ENCODE measurements at regions of chr5 and their contacts with region 1.

Region 1: GRCh38 chr5:160787240-160787639 is 64.8 kb downstream of the ATP10B start:
- DNase-seq: peak; percentile 81
- H3K4me3 ChIP-seq: no peak overlapping the region
- H3K27ac ChIP-seq: peak overlapping the region in 3 of 4 donors; percentile 29 to 46 (median 45)
- H3K4me1 ChIP-seq: peaks cover 4 to 16% (median 5%) of the 10 kb centered on the region in 4 donors
- H3K27me3 ChIP-seq: no peaks in the 10 kb centered on the region
- CTCF ChIP-seq: peak; percentile 46 to 89 (median 68)
- EP300 ChIP-seq: no peak
- POLR2A ChIP-seq: no peak

Region 2: DNA sequence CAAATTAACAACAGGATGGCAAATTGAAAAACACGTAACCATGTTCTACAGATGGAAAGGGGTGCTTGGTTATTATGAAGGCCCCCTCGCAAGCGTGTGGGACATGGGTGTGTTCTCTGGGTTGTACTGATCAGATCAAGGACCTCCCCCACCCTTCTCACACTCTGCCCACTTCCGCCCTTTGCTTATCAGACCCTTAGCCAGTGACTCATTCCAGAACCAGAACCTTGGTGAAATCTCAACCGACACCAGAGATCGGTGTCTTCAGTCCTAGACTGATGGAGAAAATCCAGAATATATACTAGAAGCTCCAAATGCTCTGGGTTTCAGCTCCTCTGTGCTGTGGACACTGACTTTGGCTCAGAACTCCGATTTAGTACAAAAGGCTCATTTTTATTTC is 300.7 kb before region 1 on chr5:
- in situ Hi-C with region 1: loop called in 1 of 4 experiments (anchors 25 kb)
- intact Hi-C with region 1: no loop called
- DNase-seq: no peak
- H3K4me3 ChIP-seq: no peak overlapping the region
- H3K27ac ChIP-seq: no peak overlapping the region
- H3K4me1 ChIP-seq: no peaks in the 10 kb centered on the region
- H3K27me3 ChIP-seq: no peaks in the 10 kb centered on the region
- CTCF ChIP-seq: no peak
- EP300 ChIP-seq: no peak
- POLR2A ChIP-seq: no peak

Region 3: GRCh38 chr5:160508780-160509361 is 278.4 kb before region 1 on chr5:
- in situ Hi-C with region 1: loop called in 1 of 4 experiments (anchors 25 kb)
- intact Hi-C with region 1: no loop called
- DNase-seq: peak; percentile 62
- H3K4me3 ChIP-seq: no peak overlapping the region
- H3K27ac ChIP-seq: no peak overlapping the region
- H3K4me1 ChIP-seq: peaks cover 0 to 8% (median 0%) of the 10 kb centered on the region in 4 donors
- H3K27me3 ChIP-seq: no peaks in the 10 kb centered on the region
- CTCF ChIP-seq: peak; percentile 83 to 90 (median 85)
- EP300 ChIP-seq: no peak
- POLR2A ChIP-seq: no peak

Measured in transverse colon (tissue), 4 donors.